ENCODE measurements at regions of chr3 and their contacts with region 1.

Region 1: DNA sequence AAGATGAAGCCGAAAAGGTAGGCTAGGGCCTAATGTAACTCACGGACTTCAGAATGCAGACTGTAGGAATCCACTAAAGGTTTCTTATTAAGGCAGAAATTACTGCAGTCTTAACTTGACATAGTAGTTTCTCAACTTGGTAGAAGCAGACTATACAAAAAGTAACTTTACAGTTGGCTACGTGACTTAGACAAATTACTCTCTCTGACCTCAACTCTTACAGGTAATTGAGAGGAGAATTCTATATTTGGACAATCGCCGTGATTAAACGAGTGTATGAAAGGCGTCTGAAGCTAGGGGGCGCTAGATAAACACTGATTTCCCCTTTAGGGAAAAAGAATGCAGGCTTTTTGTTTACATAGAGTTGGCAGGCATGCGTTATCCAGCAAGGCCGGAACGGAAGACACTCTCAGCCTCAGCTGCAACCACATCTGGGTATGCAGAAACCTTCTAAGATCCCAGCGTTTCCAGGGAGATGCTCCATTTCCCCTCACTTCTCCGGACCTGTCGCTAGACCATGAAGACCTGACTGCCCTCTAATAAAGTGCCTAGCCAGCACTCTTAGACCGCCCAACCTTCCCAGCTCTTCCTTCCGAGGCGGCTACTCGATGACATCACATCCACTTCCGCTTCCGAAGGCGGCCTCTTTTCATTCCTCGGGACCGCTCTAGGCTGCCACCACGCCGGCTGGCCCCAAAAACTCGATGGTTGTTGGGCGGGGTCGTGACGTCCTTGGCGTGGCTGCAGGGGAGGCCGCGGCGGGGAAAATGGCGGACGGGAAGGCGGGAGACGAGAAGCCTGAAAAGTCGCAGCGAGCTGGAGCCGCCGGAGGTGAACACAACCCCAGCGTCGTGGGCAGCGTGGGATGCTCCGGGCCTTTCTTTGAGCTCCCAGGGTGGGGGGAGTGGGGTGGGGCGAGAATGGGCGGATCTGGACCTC is at the start of gene PCNP:
- DNase-seq: peak; percentile 98 to 99 (median 99)
- H3K4me3 ChIP-seq: peak within 1 kb of the TSS; percentile 84
- H3K27ac ChIP-seq: peak within 1 kb of the TSS; percentile 92 to 96
- H3K4me1 ChIP-seq: peaks cover 4% of the 10 kb centered on the region
- H3K27me3 ChIP-seq: no peaks in the 10 kb centered on the region
- CTCF ChIP-seq: peak; percentile 71 to 88 (median 88)
- EP300 ChIP-seq: no peak
- POLR2A ChIP-seq: peak; percentile 86
- total RNA-seq, gene PCNP: 104 to 237 (median 166) TPM

Region 2: DNA sequence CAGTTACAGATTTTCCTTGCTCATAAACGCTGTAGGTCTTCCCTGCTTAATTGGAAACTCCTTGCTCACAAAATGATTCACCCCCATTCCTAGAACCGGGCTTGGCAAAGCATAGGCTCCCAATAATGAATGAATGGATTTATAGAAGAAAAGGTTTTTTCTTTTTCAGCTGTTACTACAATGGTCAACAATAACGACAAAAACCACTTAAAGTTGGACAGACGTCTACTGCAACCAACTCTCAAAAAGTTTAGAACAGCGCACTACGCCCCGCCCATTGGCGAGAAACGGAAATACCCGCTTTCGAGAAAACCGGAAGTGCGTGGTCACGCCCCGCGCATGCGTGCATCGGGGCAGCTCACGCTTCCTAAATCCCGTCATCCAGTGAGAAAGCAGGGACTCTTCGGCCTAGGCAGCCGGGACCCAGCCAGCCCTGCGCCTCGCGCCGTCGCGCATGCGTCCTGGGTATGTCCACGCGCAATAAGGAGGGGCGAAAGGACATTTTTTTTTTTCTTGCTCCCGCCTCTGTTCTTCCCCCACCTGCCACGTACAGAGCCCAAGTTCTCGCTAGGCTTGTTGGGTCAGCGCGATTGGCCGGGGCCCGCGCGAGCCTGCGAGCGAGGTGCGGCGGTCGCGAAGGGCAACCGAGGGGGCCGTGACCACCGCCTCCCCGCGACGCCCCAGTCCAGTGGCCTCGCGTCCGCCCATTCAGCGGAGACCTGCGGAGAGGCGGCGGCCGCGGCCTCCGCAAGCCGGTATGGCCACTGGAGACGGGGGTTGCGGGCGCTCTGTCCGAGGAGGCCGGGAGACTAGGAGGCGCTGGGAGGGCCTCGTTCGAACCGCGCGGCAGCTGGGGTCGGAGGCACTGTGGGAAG is 864.5 kb before region 1 on chr3 and contains the start of gene TFG:
- intact Hi-C with region 1: loop called in 1 of 4 experiments (anchors 2 kb)
- DNase-seq: peak; percentile 97 to 99 (median 99)
- H3K4me3 ChIP-seq: peak within 1 kb of the TSS; percentile 83
- H3K27ac ChIP-seq: peak within 1 kb of the TSS; percentile 87 to 96
- H3K4me1 ChIP-seq: peaks cover 9% of the 10 kb centered on the region
- H3K27me3 ChIP-seq: no peaks in the 10 kb centered on the region
- CTCF ChIP-seq: no peak
- EP300 ChIP-seq: peak; percentile 78
- POLR2A ChIP-seq: peak; percentile 71
- total RNA-seq, gene TFG: 38.5 to 69.5 (median 64.7) TPM

Region 3: GRCh38 chr3:101676765-101677435 is 103.2 kb after region 1 on chr3 and contains the start of gene ZBTB11:
- intact Hi-C with region 1: loop called in 1 of 4 experiments (anchors 10 kb)
- DNase-seq: peak; percentile 100
- H3K4me3 ChIP-seq: peak within 1 kb of the TSS; percentile 83
- H3K27ac ChIP-seq: peak within 1 kb of the TSS; percentile 89 to 96
- H3K4me1 ChIP-seq: peaks cover 10% of the 10 kb centered on the region
- H3K27me3 ChIP-seq: no peaks in the 10 kb centered on the region
- CTCF ChIP-seq: peak; percentile 45 to 63 (median 45)
- EP300 ChIP-seq: no peak
- POLR2A ChIP-seq: peak; percentile 93
- total RNA-seq, gene ZBTB11: 15.1 to 24.7 (median 19.3) TPM

Region 4: GRCh38 chr3:101685870-101686412 is 112.2 kb after region 1 on chr3:
- intact Hi-C with region 1: loop called in 1 of 4 experiments (anchors 5 kb)
- DNase-seq: no peak
- H3K4me3 ChIP-seq: peak overlapping the region; percentile 59
- H3K27ac ChIP-seq: peak overlapping the region; percentile 83 to 86
- H3K4me1 ChIP-seq: peaks cover 10% of the 10 kb centered on the region
- H3K27me3 ChIP-seq: no peaks in the 10 kb centered on the region
- CTCF ChIP-seq: no peak
- EP300 ChIP-seq: no peak
- POLR2A ChIP-seq: no peak

Measured in ovary (tissue), 10 donors.